MCF 10A (cell line): ENCODE measurements at regions of chr2 and their contacts with region 1.

Region 1: GRCh38 chr2:224585205-224586088 is at the start of gene CUL3:
- DNase-seq: peak; percentile 97
- H3K4me3 Mint-ChIP-seq: peak within 1 kb of the TSS; percentile 82
- H3K27ac Mint-ChIP-seq: peak within 1 kb of the TSS; percentile 91
- H3K4me1 Mint-ChIP-seq: peaks cover 5% of the 10 kb centered on the region
- H3K27me3 Mint-ChIP-seq: no peaks in the 10 kb centered on the region
- CTCF ChIP-seq: no peak
- total RNA-seq, gene CUL3: 65.5 and 65.8 TPM in 2 replicates

Region 2: DNA sequence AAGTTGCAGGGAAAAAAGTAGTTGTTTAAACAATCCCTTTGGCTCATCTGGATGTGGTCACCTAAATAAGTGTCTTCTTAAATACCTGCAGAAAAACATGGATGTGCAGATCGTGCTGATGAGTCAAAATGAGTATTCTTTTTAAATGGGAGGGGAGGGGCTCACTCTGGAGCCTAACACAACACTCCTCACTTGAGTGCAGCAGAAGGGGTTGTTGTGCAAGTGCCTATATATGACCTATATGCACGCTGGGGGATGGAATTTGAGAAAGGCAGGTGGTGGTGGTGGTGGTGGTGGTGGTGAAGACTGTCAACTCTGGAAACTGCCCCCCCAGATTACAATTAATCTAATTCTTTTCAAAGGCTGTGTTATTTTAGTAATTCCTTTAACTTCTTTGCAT is 105.6 kb before region 1 on chr2:
- CTCF ChIA-PET with region 1: interaction called, 4 read pairs
- POLR2A ChIA-PET with region 1: interaction called, 9 read pairs
- intact Hi-C with region 1: loop called (anchors 2 kb)
- DNase-seq: no peak
- H3K4me3 Mint-ChIP-seq: no peak overlapping the region
- H3K27ac Mint-ChIP-seq: no peak overlapping the region
- H3K4me1 Mint-ChIP-seq: peaks cover 7% of the 10 kb centered on the region
- H3K27me3 Mint-ChIP-seq: no peaks in the 10 kb centered on the region
- CTCF ChIP-seq: no peak

Region 3: GRCh38 chr2:224520064-224520463 is 65.4 kb before region 1 on chr2:
- CTCF ChIA-PET with region 1: no interaction called
- POLR2A ChIA-PET with region 1: interaction called, 60 read pairs
- intact Hi-C with region 1: no loop called
- DNase-seq: peak; percentile 60
- H3K4me3 Mint-ChIP-seq: no peak overlapping the region
- H3K27ac Mint-ChIP-seq: peak overlapping the region; percentile 83
- H3K4me1 Mint-ChIP-seq: peaks cover 43% of the 10 kb centered on the region
- H3K27me3 Mint-ChIP-seq: no peaks in the 10 kb centered on the region
- CTCF ChIP-seq: no peak

Region 4: GRCh38 chr2:224570328-224570993 is 15.0 kb before region 1 on chr2:
- CTCF ChIA-PET with region 1: no interaction called
- POLR2A ChIA-PET with region 1: interaction called, 10 read pairs
- intact Hi-C with region 1: no loop called
- DNase-seq: no peak
- H3K4me3 Mint-ChIP-seq: no peak overlapping the region
- H3K27ac Mint-ChIP-seq: no peak overlapping the region
- H3K4me1 Mint-ChIP-seq: peaks cover 24% of the 10 kb centered on the region
- H3K27me3 Mint-ChIP-seq: no peaks in the 10 kb centered on the region
- CTCF ChIP-seq: no peak

Region 5: DNA sequence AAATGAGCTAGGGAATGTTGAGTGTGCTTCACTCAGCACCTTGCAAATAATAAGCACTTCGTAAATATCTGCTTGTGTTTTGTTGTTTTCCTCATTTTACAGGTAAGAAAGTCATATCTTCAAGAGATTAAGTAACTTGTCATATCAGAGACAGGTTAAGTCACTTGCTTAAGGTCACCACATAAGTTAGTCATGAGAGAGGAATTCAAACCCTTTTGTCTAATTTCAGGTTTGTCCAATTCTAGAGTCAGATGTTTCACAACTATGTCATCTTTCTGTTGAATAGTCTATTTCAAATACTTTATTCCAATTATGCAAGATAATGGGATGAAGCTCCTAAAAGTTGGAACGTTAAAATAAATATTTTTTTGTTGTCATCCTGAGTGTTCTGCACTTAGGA is 13.2 kb after region 1 on chr2:
- CTCF ChIA-PET with region 1: no interaction called
- POLR2A ChIA-PET with region 1: interaction called, 10 read pairs
- intact Hi-C with region 1: no loop called
- DNase-seq: no peak
- H3K4me3 Mint-ChIP-seq: no peak overlapping the region
- H3K27ac Mint-ChIP-seq: no peak overlapping the region
- H3K4me1 Mint-ChIP-seq: no peaks in the 10 kb centered on the region
- H3K27me3 Mint-ChIP-seq: no peaks in the 10 kb centered on the region
- CTCF ChIP-seq: no peak